Panc1 (cell line): ENCODE measurements at regions of chr6 and their contacts with region 1.

Region 1: GRCh38 chr6:56902641-56903464 is 52.1 kb upstream of the BEND6 start:
- DNase-seq: no peak
- ATAC-seq: peak; percentile 46; the same call in 1 of the 2 replicates
- H3K4me3 ChIP-seq: no peak overlapping the region
- H3K27ac ChIP-seq: 0 out of 2 replicates have a peak overlapping the region, but pooled peaks have one; percentile 25
- H3K4me1 ChIP-seq: peaks cover 15% of the 10 kb centered on the region; the same call in 1 of the 2 replicates
- H3K27me3 ChIP-seq: no peaks in the 10 kb centered on the region
- CTCF ChIP-seq: peak; percentile 89

Region 2: GRCh38 chr6:56827908-56828649 is 74.8 kb before region 1 on chr6:
- CTCF ChIA-PET with region 1: no interaction called
- POLR2A ChIA-PET with region 1: no interaction called
- in situ Hi-C with region 1: no loop called
- intact Hi-C with region 1: no loop called
- DNase-seq: no peak
- ATAC-seq: peak; percentile 69; the same call in 1 of the 2 replicates
- H3K4me3 ChIP-seq: no peak overlapping the region
- H3K27ac ChIP-seq: peak overlapping the region; percentile 24; the same call in 1 of the 2 replicates
- H3K4me1 ChIP-seq: peaks cover 18% of the 10 kb centered on the region
- H3K27me3 ChIP-seq: no peaks in the 10 kb centered on the region
- CTCF ChIP-seq: no peak

Region 3: DNA sequence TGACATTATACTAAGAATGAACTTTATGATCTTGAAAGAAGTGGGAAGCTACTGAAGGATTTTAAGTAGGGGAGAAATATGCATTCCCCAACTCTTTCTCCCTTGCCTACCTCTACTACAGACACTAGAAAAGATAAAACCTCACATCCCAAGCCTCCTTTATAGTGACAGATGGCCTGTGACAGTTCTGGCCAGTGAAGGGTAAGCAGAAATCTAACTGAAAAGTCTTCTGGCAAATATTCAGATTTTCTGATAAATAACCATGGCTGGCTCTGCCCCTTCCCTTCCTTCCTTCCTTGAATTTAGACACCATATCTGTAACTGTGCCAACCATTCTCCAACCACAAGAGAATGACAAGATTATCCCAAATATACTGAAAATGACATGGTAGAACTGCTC is 41.8 kb after region 1 on chr6:
- CTCF ChIA-PET with region 1: no interaction called
- POLR2A ChIA-PET with region 1: no interaction called
- in situ Hi-C with region 1: no loop called
- intact Hi-C with region 1: no loop called
- DNase-seq: no peak
- ATAC-seq: no peak
- H3K4me3 ChIP-seq: no peak overlapping the region
- H3K27ac ChIP-seq: no peak overlapping the region
- H3K4me1 ChIP-seq: no peaks in the 10 kb centered on the region
- H3K27me3 ChIP-seq: no peaks in the 10 kb centered on the region
- CTCF ChIP-seq: no peak

Region 4: GRCh38 chr6:56995347-56995902 is 92.6 kb after region 1 on chr6:
- CTCF ChIA-PET with region 1: no interaction called
- POLR2A ChIA-PET with region 1: interaction called, 10 read pairs
- in situ Hi-C with region 1: no loop called
- intact Hi-C with region 1: no loop called
- DNase-seq: no peak
- ATAC-seq: 0 out of 2 replicates have a peak, but pooled peaks have one; percentile 53
- H3K4me3 ChIP-seq: no peak overlapping the region
- H3K27ac ChIP-seq: no peak overlapping the region
- H3K4me1 ChIP-seq: no peaks in the 10 kb centered on the region
- H3K27me3 ChIP-seq: no peaks in the 10 kb centered on the region
- CTCF ChIP-seq: peak; percentile 64

Region 5: DNA sequence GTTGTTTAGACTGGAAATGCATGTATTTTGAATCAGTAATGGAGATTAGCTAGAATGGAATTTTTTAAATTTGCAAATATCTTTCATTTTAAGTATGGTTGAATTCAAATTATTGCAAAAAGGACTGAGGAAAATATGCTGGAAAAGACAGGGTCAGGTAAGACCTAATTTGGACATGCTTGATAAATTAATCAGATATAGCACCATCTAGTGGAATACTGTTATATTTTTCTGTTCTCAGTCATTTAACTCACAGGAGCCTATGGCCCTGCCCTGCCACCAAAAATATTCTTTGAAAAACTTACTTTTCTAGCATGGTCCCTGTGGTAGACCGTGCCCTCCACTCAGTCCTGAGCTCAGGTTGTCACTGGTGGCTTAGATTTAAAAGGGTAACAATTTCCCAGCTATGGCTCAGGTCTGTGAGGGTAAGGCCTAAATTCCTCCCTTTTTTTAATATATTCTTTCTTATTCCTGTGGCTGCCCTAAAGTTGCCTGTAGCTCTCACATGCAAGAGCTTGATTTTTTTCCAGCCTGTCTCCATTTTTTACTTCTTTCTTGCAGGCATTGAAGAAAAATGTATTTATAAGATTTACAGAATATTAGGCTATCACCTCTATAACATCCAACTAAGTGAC is 118.3 kb after region 1 on chr6:
- CTCF ChIA-PET with region 1: interaction called, 6 read pairs
- POLR2A ChIA-PET with region 1: no interaction called
- in situ Hi-C with region 1: no loop called
- intact Hi-C with region 1: loop called (anchors 2 kb)
- DNase-seq: peak; percentile 68
- ATAC-seq: peak; percentile 87
- H3K4me3 ChIP-seq: no peak overlapping the region
- H3K27ac ChIP-seq: no peak overlapping the region
- H3K4me1 ChIP-seq: no peaks in the 10 kb centered on the region
- H3K27me3 ChIP-seq: no peaks in the 10 kb centered on the region
- CTCF ChIP-seq: peak; percentile 81